ENCODE measurements at regions of chr17 and their contacts with region 1.

Region 1: DNA sequence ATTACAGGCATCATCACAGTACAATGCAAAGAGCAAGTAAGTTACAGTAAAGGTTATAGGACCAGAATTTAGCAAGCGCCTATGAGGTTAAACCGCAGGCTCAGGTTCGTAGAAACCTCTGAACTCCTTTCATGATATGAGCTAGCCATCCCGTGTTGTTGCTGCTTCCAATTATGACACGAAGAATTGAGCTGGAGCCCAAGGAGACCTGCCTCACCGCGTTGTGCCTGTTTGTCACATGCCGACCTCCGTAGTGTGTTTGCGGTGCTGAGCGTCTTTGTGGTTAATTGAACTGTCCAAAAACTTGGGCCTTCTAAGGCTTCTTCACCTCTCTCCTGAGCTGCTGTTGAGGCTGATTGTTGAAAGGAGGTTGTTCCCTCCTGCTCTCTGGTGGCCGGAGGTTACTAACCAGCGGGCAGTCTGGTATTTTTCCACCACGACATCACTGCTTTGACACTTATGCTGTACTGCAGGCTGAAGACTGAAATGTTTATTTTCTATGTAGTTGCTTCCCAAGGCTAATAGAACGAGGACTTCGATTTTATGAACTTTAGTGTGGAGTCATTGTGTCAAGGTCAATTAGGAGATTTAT is 67.5 kb downstream of the SEC14L1 start:
- DNase-seq: no peak
- H3K4me3 ChIP-seq: no peak overlapping the region
- H3K27ac ChIP-seq: peak overlapping the region; percentile 29 to 65 (median 56)
- H3K4me1 ChIP-seq: peaks cover 0 to 29% (median 19%) of the 10 kb centered on the region in 4 donors
- H3K27me3 ChIP-seq: no peaks in the 10 kb centered on the region
- CTCF ChIP-seq: peak in 2 of 4 experiments; percentile 14
- EP300 ChIP-seq: no peak
- POLR2A ChIP-seq: no peak

Region 2: GRCh38 chr17:76353599-76354316 is 854.6 kb before region 1 on chr17 and contains the start of gene PRPSAP1:
- intact Hi-C with region 1: no loop called
- DNase-seq: peak; percentile 92
- H3K4me3 ChIP-seq: peak within 1 kb of the TSS; percentile 72 to 98 (median 86)
- H3K27ac ChIP-seq: peak within 1 kb of the TSS; percentile 79 to 89 (median 86)
- H3K4me1 ChIP-seq: peaks cover 3 to 21% (median 18%) of the 10 kb centered on the region in 4 donors
- H3K27me3 ChIP-seq: no peaks in the 10 kb centered on the region
- CTCF ChIP-seq: peak in 3 of 4 experiments; percentile 27 to 42 (median 35)
- EP300 ChIP-seq: no peak
- POLR2A ChIP-seq: peak; percentile 61 to 75
- total RNA-seq, gene PRPSAP1: 39.0 to 70.3 (median 42.3) TPM

Region 3: GRCh38 chr17:77096570-77097214 is 111.6 kb before region 1 on chr17:
- intact Hi-C with region 1: loop called (anchors 5 kb)
- DNase-seq: no peak
- H3K4me3 ChIP-seq: peak overlapping the region in 1 of 4 donors; percentile 4
- H3K27ac ChIP-seq: peak overlapping the region; percentile 76 to 80 (median 78)
- H3K4me1 ChIP-seq: peaks cover 0 to 41% (median 37%) of the 10 kb centered on the region in 4 donors
- H3K27me3 ChIP-seq: no peaks in the 10 kb centered on the region
- CTCF ChIP-seq: peak; percentile 67 to 95 (median 78)
- EP300 ChIP-seq: no peak
- POLR2A ChIP-seq: no peak

Region 4: DNA sequence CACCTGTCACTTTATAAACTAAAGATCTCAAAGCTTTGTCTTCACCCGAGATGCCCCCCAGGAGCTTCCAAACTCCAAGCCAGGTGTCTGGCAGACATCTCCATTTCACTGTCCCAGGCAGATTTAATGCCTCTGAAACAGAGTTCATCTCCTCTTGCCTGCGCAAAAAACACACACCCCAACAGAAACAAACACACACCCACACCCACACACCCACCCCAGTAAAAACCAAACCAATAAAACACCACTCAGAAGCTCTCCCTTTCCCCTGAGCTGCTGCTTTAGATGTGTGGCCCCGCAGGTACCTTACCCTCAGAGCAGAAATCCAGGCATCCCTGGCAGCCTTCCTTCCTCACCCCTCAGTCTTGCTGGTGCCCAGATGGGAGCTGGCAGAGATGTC is 53.2 kb before region 1 on chr17:
- intact Hi-C with region 1: loop called (anchors 5 kb)
- DNase-seq: no peak
- H3K4me3 ChIP-seq: no peak overlapping the region
- H3K27ac ChIP-seq: no peak overlapping the region
- H3K4me1 ChIP-seq: peaks cover 0 to 40% (median 22%) of the 10 kb centered on the region in 4 donors
- H3K27me3 ChIP-seq: no peaks in the 10 kb centered on the region
- CTCF ChIP-seq: no peak
- EP300 ChIP-seq: no peak
- POLR2A ChIP-seq: no peak